Heart right ventricle (tissue), 16 donors: ENCODE measurements at regions of chr2 and their contacts with region 1.

Region 1: GRCh38 chr2:68251187-68251854 is 1.0 kb downstream of the PPP3R1 start:
- DNase-seq: peak; percentile 45 to 76
- ATAC-seq: peak; percentile 42 to 73 (median 64)
- H3K4me3 ChIP-seq: peak overlapping the region; percentile 54 to 83 (median 76)
- H3K27ac ChIP-seq: peak overlapping the region; percentile 85 to 99 (median 93)
- H3K4me1 ChIP-seq: peaks cover 6 to 74% (median 59%) of the 10 kb centered on the region in 9 donors
- H3K27me3 ChIP-seq: no peaks in the 10 kb centered on the region
- CTCF ChIP-seq: peak in 8 of 9 donors; percentile 50 to 80 (median 71)

Region 2: GRCh38 chr2:67397143-67397986 is 854.0 kb before region 1 on chr2 and contains the start of gene ETAA1:
- intact Hi-C with region 1: no loop called
- DNase-seq: peak; percentile 94 to 95
- ATAC-seq: peak; percentile 100
- H3K4me3 ChIP-seq: peak within 1 kb of the TSS; percentile 66 to 99 (median 93)
- H3K27ac ChIP-seq: peak within 1 kb of the TSS; percentile 57 to 97 (median 89)
- H3K4me1 ChIP-seq: peaks cover 0 to 39% (median 20%) of the 10 kb centered on the region in 9 donors
- H3K27me3 ChIP-seq: no peaks in the 10 kb centered on the region
- CTCF ChIP-seq: peak in 1 of 9 donors; percentile 8
- total RNA-seq, gene ETAA1: 3.7 to 7.0 (median 5.4) TPM

Region 3: GRCh38 chr2:68157402-68158133 is 93.8 kb before region 1 on chr2 and contains the start of gene PNO1:
- intact Hi-C with region 1: loop called in 7 of 10 experiments (anchors 1 to 5 kb)
- DNase-seq: peak; percentile 93 to 98
- ATAC-seq: peak; percentile 97 to 99 (median 98)
- H3K4me3 ChIP-seq: peak within 1 kb of the TSS; percentile 59 to 96 (median 80)
- H3K27ac ChIP-seq: peak within 1 kb of the TSS; percentile 83 to 95 (median 91)
- H3K4me1 ChIP-seq: peaks cover 0 to 49% (median 39%) of the 10 kb centered on the region in 9 donors
- H3K27me3 ChIP-seq: no peaks in the 10 kb centered on the region
- CTCF ChIP-seq: no peak
- total RNA-seq, gene PNO1: 5.7 to 13.2 (median 8.6) TPM

Region 4: GRCh38 chr2:68216454-68217310 is 34.6 kb before region 1 on chr2:
- intact Hi-C with region 1: loop called in 1 of 10 experiments (anchors 5 kb)
- DNase-seq: no peak
- ATAC-seq: no peak
- H3K4me3 ChIP-seq: no peak overlapping the region
- H3K27ac ChIP-seq: no peak overlapping the region
- H3K4me1 ChIP-seq: peaks cover 0 to 62% (median 49%) of the 10 kb centered on the region in 9 donors
- H3K27me3 ChIP-seq: no peaks in the 10 kb centered on the region
- CTCF ChIP-seq: no peak

Region 5: DNA sequence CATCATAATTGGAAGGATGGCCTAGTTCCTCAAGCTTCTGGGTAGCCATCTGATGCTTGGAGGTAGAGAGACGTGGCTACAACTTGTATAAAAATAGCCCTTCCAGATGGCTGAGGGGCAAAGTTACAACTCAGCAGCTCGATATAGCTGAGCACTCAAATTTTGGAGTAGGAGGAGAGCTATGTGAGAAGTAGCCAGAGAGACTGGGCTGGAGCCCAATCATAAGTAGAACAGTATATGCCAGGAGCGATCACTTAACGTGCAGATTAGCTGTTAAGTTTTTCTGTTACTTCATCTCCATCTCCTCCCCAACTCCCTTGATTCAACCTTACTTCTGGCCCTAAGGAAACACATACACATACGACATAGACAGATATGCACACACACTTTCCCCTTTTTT is 39.6 kb after region 1 on chr2:
- intact Hi-C with region 1: loop called in 2 of 10 experiments (anchors 5 kb)
- DNase-seq: peak in 1 of 2 donors; percentile 26
- ATAC-seq: peak; percentile 40 to 92 (median 80)
- H3K4me3 ChIP-seq: no peak overlapping the region
- H3K27ac ChIP-seq: peak overlapping the region in 3 of 10 donors; percentile 28 to 47 (median 28)
- H3K4me1 ChIP-seq: peaks cover 0 to 45% (median 16%) of the 10 kb centered on the region in 9 donors
- H3K27me3 ChIP-seq: no peaks in the 10 kb centered on the region
- CTCF ChIP-seq: no peak

Region 6: GRCh38 chr2:68441179-68441993 is 190.1 kb after region 1 on chr2:
- intact Hi-C with region 1: loop called in 1 of 10 experiments (anchors 10 kb)
- DNase-seq: peak; percentile 38 to 86
- ATAC-seq: peak; percentile 90 to 95 (median 92)
- H3K4me3 ChIP-seq: no peak overlapping the region
- H3K27ac ChIP-seq: peak overlapping the region in 7 of 10 donors; percentile 16 to 64 (median 44)
- H3K4me1 ChIP-seq: peaks cover 3 to 30% (median 14%) of the 10 kb centered on the region in 9 donors
- H3K27me3 ChIP-seq: no peaks in the 10 kb centered on the region
- CTCF ChIP-seq: peak; percentile 83 to 95 (median 91)